ENCODE measurements at regions of chr9 and their contacts with region 1.

Region 1: DNA sequence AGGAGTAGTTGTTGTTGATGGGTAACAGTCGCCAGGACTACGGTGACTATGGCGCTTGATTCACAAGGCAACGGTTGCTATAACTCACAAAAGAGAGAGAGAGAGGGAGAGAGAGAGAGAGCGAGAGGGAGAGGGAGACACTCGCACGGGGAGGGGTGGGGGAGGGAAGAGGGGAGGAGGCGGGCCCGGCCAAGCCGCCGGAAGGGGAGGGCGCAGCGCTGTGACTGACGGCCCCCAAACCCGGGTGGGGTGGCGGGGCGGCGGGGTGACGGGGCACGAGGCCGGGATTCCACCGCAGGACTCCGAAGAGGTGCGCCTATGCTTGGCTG is at the start of gene RFX3:
- DNase-seq: peak; percentile 92 to 95 (median 94)
- ATAC-seq: peak; percentile 95 to 97 (median 96)
- H3K4me3 ChIP-seq: peak within 1 kb of the TSS; percentile 47 to 95 (median 83)
- H3K27ac ChIP-seq: peak within 1 kb of the TSS; percentile 97 to 100 (median 100)
- H3K4me1 ChIP-seq: peaks cover 0 to 45% (median 17%) of the 10 kb centered on the region in 12 donors
- H3K27me3 ChIP-seq: no peaks in the 10 kb centered on the region
- CTCF ChIP-seq: no peak
- POLR2A ChIP-seq: peak in 1 of 2 donors; percentile 29
- total RNA-seq, gene RFX3: 1.7 to 8.3 (median 2.9) TPM

Region 2: DNA sequence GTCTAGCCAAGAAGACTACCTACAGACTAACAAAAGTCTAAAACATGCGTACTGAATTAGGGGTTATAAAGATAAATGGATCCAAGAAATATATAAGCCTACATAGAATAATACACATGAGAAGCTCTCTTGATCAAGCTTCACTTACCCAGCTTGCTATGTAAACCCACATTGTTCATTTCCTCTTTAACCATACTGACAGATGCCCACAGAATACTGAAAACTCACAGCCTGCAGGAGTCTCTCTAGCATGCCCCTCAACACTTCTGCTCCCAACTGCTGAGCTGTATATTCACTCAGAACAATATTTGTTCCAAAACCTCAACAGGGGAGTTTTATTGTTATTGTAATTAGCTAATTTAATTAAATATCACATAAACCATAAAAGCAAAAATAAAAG is 52.4 kb before region 1 on chr9:
- intact Hi-C with region 1: loop called in 5 of 10 experiments (anchors 5 to 10 kb)
- DNase-seq: no peak
- ATAC-seq: no peak
- H3K4me3 ChIP-seq: no peak overlapping the region
- H3K27ac ChIP-seq: no peak overlapping the region
- H3K4me1 ChIP-seq: peaks cover 0 to 26% (median 7%) of the 10 kb centered on the region in 12 donors
- H3K27me3 ChIP-seq: no peaks in the 10 kb centered on the region
- CTCF ChIP-seq: no peak
- POLR2A ChIP-seq: no peak

Region 3: DNA sequence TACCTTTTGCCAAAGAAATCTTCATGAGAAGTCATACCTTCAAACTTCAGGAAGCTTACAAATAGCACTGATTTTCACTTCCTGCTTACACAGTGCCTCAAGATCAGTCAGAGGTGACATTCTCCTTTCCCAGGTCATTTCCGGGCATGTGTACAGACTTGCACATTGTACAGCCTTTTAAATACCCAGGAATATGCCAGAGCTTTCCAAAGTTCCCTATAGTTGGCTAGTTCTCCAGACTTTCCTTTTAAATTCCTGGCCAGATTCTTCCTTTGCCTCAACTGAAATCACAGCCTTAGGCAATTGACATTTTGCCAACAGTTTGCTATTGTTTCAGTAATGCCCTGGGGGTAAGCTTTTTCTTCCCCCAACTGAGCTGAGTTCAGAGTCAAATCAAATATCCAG is 47.2 kb before region 1 on chr9:
- intact Hi-C with region 1: loop called in 4 of 10 experiments (anchors 5 to 10 kb)
- DNase-seq: no peak
- ATAC-seq: peak in 1 of 4 donors; percentile 74
- H3K4me3 ChIP-seq: no peak overlapping the region
- H3K27ac ChIP-seq: peak overlapping the region in 6 of 12 donors; percentile 5 to 28 (median 17)
- H3K4me1 ChIP-seq: peaks cover 0 to 39% (median 0%) of the 10 kb centered on the region in 12 donors
- H3K27me3 ChIP-seq: no peaks in the 10 kb centered on the region
- CTCF ChIP-seq: no peak
- POLR2A ChIP-seq: no peak

Region 4: GRCh38 chr9:3585606-3586005 is 59.8 kb after region 1 on chr9:
- intact Hi-C with region 1: no loop called
- DNase-seq: no peak
- ATAC-seq: no peak
- H3K4me3 ChIP-seq: no peak overlapping the region
- H3K27ac ChIP-seq: no peak overlapping the region
- H3K4me1 ChIP-seq: no peaks in the 10 kb centered on the region
- H3K27me3 ChIP-seq: no peaks in the 10 kb centered on the region
- CTCF ChIP-seq: no peak
- POLR2A ChIP-seq: no peak

Region 5: GRCh38 chr9:3746296-3747275 is 220.8 kb after region 1 on chr9:
- intact Hi-C with region 1: no loop called
- DNase-seq: no peak
- ATAC-seq: no peak
- H3K4me3 ChIP-seq: no peak overlapping the region
- H3K27ac ChIP-seq: no peak overlapping the region
- H3K4me1 ChIP-seq: peaks cover 0 to under 1% (median 0%) of the 10 kb centered on the region in 12 donors
- H3K27me3 ChIP-seq: no peaks in the 10 kb centered on the region
- CTCF ChIP-seq: no peak
- POLR2A ChIP-seq: no peak